ENCODE measurements at regions of chr2 and their contacts with region 1.

Region 1: DNA sequence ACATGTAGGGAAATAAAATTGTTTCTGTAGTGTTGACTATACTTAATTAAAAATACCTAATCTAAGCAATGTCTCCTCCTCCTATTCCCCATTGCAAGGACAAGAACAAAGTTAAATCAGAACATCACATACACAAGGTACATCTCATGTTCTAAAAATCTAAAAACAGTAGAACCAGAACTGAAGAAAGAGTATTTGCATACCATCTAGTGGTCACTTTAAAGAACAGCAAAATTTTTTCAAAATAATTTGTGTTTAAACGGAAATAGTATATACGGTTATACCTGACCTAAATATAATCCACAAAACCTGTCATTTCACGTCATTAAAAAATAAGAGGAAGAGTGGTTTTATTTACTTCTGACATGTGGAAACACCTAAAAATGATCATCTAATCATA is 294.3 kb upstream of the KCNH7 start:
- DNase-seq: no peak
- CTCF ChIP-seq: peak; percentile 12

Region 2: DNA sequence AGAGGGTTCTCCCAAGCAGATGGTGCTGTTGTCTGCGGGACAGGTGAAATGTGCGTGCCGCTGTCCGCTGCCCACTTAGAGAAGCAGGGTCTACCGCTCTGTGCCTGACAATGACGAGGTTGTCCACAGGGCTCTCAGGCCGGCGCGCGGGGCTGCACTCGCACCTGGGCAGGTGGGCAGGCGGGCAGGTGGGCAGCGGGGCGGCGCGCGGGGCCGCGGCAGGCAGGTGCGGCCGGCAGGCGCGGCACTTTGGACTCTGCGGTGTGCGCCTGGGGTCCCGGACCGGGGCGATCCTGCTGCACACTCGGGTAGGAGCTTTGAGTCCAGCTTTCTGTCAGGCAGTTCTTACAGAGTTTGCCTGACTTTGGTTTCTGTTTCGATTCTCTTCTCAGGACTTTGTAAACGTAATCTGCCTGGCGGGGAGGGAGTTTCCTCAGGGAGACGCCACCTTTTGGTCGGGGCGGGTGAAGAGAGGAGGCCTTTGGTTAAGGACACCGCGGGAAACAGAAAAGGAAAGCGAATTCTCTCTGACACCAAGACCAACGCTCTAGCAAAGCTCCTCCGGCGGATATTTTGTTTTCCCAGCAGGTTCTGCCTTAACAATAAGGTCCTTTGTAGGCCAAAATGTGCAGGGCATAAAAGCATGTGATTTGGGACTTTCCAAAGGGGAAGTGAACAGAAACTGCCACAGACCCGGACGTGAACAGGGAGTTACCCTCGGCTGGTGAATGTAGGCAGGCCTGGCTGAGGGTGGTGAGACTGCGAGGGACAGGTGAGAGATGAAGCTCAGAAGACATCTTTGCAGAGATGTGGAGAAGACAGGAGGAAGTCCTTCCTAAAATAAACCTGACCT is 814.3 kb before region 1 on chr2 and contains the start of gene IFIH1:
- in situ Hi-C with region 1: no loop called
- DNase-seq: peak; percentile 86
- CTCF ChIP-seq: peak; percentile 25

Region 3: DNA sequence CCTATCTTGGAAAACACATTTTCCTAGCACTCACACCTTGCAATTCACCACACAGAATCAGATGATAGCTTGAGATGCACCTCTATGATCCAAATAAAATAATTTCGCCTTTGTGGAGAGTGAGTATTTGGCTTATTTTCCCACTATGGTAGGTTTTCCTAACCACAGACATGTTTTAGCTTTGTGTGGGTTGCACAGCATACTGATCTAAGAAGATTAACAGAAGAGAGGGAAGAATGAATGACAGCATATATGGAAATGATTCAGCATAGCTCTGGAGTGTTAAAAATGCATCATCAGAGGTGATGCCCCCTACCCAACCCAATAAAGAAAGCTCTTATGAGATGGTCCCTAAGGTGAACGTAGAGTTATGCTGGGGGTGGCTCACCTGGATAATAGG is 716.4 kb before region 1 on chr2:
- in situ Hi-C with region 1: no loop called
- DNase-seq: no peak
- CTCF ChIP-seq: no peak

Region 4: GRCh38 chr2:162890690-162891311 is 242.0 kb before region 1 on chr2:
- in situ Hi-C with region 1: loop called (anchors 25 kb)
- DNase-seq: peak; percentile 13
- CTCF ChIP-seq: peak; percentile 80

Region 5: GRCh38 chr2:162967147-162967546 is 165.7 kb before region 1 on chr2:
- in situ Hi-C with region 1: no loop called
- DNase-seq: no peak
- CTCF ChIP-seq: no peak

Region 6: GRCh38 chr2:163348857-163349380 is 216.1 kb after region 1 on chr2:
- in situ Hi-C with region 1: no loop called
- DNase-seq: no peak
- CTCF ChIP-seq: no peak

Measured in GM13976 (cell line).